ENCODE measurements at regions of chr3 and their contacts with region 1.

Region 1: DNA sequence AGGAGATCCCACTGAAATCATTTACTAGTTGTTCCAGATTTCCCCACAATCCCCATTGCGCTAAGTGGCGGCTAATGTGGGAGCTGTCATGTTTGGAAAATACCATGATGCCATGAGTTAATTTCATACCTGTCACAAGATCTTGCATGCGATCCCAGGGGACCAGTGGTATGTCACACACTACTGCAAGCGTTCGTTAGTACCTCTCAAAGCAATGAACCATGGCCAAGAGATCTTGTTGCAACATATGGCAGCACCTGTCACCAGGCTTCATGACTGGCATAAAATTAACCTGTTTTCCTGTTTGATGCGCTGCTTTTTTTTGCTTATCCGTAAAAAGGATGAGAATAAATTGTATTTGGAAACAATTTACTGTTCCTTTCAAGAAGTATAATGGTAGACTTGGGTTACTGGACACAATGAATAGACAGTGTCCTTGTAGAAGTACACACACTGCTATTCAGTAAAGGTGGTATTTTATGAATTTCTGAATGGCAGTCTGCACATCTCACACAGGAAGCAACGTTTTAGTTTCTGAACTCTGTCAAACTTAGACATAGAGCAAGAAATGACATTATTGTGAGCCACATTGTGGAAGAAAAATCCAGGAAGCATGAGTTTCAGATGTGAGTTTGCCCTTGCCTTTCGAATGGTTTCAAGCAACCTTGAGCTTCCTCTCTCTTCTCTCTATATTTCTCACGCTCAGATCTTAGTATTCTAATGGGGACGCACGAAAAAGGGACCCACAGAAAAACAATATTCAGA is 81.9 kb downstream of the CHL1 start:
- DNase-seq: peak; percentile 93
- ATAC-seq: peak; percentile 94
- H3K4me3 ChIP-seq: peak overlapping the region in 4 of 5 experiments; percentile 9 to 54 (median 39)
- H3K4me3 Mint-ChIP-seq: peak overlapping the region; percentile 75
- H3K27ac ChIP-seq: peak overlapping the region; percentile 98 to 99
- H3K27ac Mint-ChIP-seq: peak overlapping the region; percentile 94
- H3K4me1 ChIP-seq: peaks cover 60 to 62% of the 10 kb centered on the region in 2 donors
- H3K4me1 Mint-ChIP-seq: peaks cover 60% of the 10 kb centered on the region
- H3K27me3 ChIP-seq: no peaks in the 10 kb centered on the region
- H3K27me3 Mint-ChIP-seq: no peaks in the 10 kb centered on the region
- CTCF ChIP-seq: no peak

Region 2: GRCh38 chr3:24006-24405 is 254.5 kb before region 1 on chr3:
- CTCF ChIA-PET with region 1: no interaction called
- POLR2A ChIA-PET with region 1: no interaction called
- intact Hi-C with region 1: no loop called
- DNase-seq: no peak
- ATAC-seq: no peak
- H3K4me3 ChIP-seq: no peak overlapping the region
- H3K4me3 Mint-ChIP-seq: no peak overlapping the region
- H3K27ac ChIP-seq: no peak overlapping the region
- H3K27ac Mint-ChIP-seq: no peak overlapping the region
- H3K4me1 ChIP-seq: no peaks in the 10 kb centered on the region
- H3K4me1 Mint-ChIP-seq: no peaks in the 10 kb centered on the region
- H3K27me3 ChIP-seq: no peaks in the 10 kb centered on the region
- H3K27me3 Mint-ChIP-seq: peaks cover 40% of the 10 kb centered on the region
- CTCF ChIP-seq: no peak

Region 3: GRCh38 chr3:192215-192929 is 86.1 kb before region 1 on chr3:
- CTCF ChIA-PET with region 1: no interaction called
- POLR2A ChIA-PET with region 1: no interaction called
- intact Hi-C with region 1: loop called (anchors 1 kb)
- DNase-seq: peak; percentile 49
- ATAC-seq: peak; percentile 43
- H3K4me3 ChIP-seq: no peak overlapping the region
- H3K4me3 Mint-ChIP-seq: no peak overlapping the region
- H3K27ac ChIP-seq: no peak overlapping the region
- H3K27ac Mint-ChIP-seq: peak overlapping the region; percentile 46
- H3K4me1 ChIP-seq: peaks cover 15% of the 10 kb centered on the region in 2 donors
- H3K4me1 Mint-ChIP-seq: peaks cover 10% of the 10 kb centered on the region
- H3K27me3 ChIP-seq: peaks cover 0 to 11% (median 6%) of the 10 kb centered on the region in 4 experiments
- H3K27me3 Mint-ChIP-seq: peaks cover 12% of the 10 kb centered on the region
- CTCF ChIP-seq: no peak

Region 4: DNA sequence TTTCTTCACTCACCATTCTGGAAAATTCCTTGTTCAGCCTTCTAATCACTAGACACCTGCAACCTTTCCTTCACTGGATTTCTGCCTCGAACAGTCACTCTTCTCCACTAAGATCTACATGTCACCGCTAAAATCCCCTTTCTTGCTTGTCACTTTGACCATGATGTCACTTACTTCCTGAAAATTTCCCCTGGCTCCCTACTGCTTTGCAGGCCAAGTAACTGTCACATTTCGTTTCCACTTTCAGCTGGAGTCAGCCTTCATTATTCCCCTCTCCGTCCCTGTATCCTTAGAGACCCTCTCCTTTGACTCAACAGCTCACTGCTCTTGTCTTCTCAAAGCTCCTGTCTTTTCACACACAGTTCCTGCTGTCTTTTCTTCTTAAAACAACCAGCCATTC is 66.0 kb before region 1 on chr3:
- CTCF ChIA-PET with region 1: no interaction called
- POLR2A ChIA-PET with region 1: no interaction called
- intact Hi-C with region 1: loop called (anchors 2 kb)
- DNase-seq: peak; percentile 80
- ATAC-seq: peak; percentile 76
- H3K4me3 ChIP-seq: no peak overlapping the region
- H3K4me3 Mint-ChIP-seq: peak overlapping the region; percentile 57
- H3K27ac ChIP-seq: peak overlapping the region; percentile 22 to 55
- H3K27ac Mint-ChIP-seq: peak overlapping the region; percentile 82
- H3K4me1 ChIP-seq: peaks cover 16% of the 10 kb centered on the region in 2 donors
- H3K4me1 Mint-ChIP-seq: peaks cover 17% of the 10 kb centered on the region
- H3K27me3 ChIP-seq: no peaks in the 10 kb centered on the region
- H3K27me3 Mint-ChIP-seq: no peaks in the 10 kb centered on the region
- CTCF ChIP-seq: no peak

Region 5: GRCh38 chr3:294096-294495 is 15.6 kb after region 1 on chr3:
- CTCF ChIA-PET with region 1: interaction called, 10 read pairs
- POLR2A ChIA-PET with region 1: interaction called, 10 read pairs
- intact Hi-C with region 1: loop called (anchors 1 kb)
- DNase-seq: no peak
- ATAC-seq: no peak
- H3K4me3 ChIP-seq: no peak overlapping the region
- H3K4me3 Mint-ChIP-seq: no peak overlapping the region
- H3K27ac ChIP-seq: no peak overlapping the region
- H3K27ac Mint-ChIP-seq: peak overlapping the region; percentile 32
- H3K4me1 ChIP-seq: peaks cover 40 to 41% of the 10 kb centered on the region in 2 donors
- H3K4me1 Mint-ChIP-seq: peaks cover 47% of the 10 kb centered on the region
- H3K27me3 ChIP-seq: no peaks in the 10 kb centered on the region
- H3K27me3 Mint-ChIP-seq: no peaks in the 10 kb centered on the region
- CTCF ChIP-seq: no peak

Measured in B cell (primary cell).